Posterior cingulate gyrus (tissue), 11 donors: ENCODE measurements at regions of chr19 and their contacts with region 1.

Region 1: GRCh38 chr19:24033301-24033962 is 53.6 kb upstream of the ZNF254 start:
- DNase-seq: peak; percentile 70 to 97 (median 89)

Region 2: DNA sequence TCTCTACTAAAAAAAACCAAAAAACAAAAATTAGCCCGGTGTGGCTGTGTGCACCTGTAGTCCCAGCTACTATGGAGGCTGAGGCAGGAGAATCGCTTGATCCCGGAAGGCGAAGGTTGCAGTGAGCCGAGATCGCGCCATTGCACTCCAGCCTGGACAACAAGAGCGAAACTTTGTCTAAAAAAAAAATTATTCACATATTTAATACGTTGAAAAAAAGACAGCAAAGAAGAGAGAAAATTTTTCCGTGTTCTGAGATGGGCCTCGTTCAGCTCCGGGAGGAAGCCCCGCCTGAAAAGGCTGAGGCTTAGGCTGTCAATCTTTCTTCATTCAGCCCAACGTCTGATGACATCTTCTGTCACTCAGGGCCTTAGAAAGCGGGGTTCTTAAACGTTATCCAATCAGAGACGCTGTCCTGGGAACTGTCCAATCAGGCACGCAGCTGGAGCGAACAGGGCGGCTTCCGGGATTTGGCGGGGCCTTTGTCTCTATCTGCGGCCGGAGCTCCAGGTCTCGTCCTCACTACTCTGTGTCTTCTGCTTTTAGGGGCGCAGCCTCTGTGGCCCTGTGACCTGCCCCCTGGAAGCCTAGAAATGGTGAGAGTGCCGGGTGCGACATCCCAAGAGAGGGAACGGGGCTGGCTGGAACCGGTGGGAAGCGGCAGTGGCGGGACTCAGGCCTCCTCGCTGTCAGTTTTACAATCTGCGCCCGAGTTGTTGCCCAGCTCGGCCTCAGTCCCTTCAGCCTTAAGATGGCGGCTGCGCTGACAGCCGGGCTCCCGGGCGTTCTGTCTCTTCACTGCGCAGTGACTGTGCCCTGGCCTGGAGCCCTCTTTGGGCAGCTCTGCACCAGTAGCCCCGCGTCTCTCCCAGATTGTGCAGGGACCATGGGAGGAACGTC is 118.8 kb before region 1 on chr19 and contains the start of gene ZNF726:
- intact Hi-C with region 1: loop called (anchors 10 kb)
- DNase-seq: peak; percentile 78 to 96 (median 90)

Region 3: GRCh38 chr19:24086974-24087595 is 53.7 kb after region 1 on chr19 and contains the start of gene ZNF254:
- intact Hi-C with region 1: loop called (anchors 5 kb)
- DNase-seq: peak; percentile 81 to 99 (median 91)